Left cardiac atrium (tissue), 4 donors: ENCODE measurements at regions of chr15 and their contacts with region 1.

Region 1: DNA sequence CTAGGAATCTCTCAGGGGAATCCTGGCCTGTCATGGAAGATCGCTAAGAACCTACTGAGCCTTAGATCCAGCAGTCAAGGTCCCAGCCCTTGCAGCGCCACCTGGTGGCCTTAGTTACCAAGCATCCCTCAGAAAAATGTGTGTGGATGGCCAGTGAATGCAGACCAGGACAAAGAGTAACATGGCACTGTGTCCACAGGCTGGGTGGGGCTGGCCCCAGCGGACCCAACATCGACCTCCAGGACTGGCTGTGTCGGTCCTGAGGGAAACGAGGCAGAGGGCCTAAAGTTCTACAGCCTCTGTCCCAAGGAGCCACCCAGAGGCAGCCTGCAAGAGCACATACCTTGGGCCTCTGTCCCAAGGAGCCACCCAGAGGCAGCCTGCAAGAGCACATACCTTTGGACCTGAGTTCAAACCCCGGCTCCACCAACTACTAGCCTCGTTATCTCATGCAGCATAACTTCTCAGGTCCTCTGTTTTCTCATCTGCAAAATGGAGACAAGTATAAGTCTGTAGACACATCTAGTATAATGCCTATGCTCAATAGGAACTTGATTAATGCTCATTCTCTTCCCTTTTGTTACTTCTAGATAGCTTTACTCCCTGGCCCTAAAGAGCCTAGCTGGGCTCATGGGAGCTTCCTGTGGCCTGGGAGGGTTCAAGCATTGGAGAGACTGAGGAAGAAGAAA is 57.5 kb upstream of the HERC1 start:
- DNase-seq: peak; percentile 85
- ATAC-seq: peak; percentile 51 to 65

Region 2: GRCh38 chr15:63752075-63752684 is 139.0 kb before region 1 on chr15:
- intact Hi-C with region 1: loop called (anchors 2 to 10 kb)
- DNase-seq: no peak
- ATAC-seq: peak; percentile 63 to 80

Region 3: DNA sequence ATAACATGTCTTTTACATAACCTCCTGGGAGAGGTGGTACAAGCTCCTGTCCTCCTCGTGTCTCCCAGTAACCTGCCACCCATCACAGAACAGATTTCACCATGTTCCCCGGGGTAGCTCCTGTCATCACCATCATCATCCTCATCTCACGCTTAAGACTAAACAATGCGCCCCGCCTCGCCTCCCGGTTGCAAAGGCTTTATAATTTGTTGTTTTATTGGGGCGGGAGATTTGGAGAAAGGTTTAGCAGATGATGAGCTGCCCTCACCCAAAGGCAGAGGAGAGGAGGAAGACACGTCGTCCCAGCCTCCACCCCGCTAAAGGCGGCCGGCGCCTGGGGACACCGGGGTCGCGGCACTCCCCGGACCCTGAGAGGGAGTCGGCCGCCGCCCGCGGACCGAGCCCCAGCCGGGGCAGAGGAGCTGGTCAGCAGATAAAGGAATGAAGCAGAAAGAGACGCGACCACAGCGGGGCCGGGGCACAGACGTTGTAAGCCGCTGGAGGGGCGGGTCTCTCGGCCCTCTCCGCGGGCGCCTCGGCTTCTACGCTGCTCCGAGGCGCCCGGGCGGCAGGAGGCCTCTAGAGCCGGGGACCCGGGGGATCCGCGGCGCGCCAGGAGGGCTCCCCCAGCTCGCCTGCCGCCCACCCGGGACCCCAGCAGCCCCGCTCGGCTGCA is 58.1 kb before region 1 on chr15:
- intact Hi-C with region 1: loop called in 1 of 2 experiments (anchors 5 kb)
- DNase-seq: peak; percentile 47
- ATAC-seq: peak; percentile 80 to 83

Region 4: GRCh38 chr15:63970621-63971426 is 79.6 kb after region 1 on chr15:
- intact Hi-C with region 1: no loop called
- DNase-seq: no peak
- ATAC-seq: no peak